HEK293 (cell line): ENCODE measurements at regions of chr11 and their contacts with region 1.

Region 1: GRCh38 chr11:66842896-66843775 is at the start of gene RCE1:
- H3K4me3 ChIP-seq: peak within 1 kb of the TSS; percentile 71
- H3K27ac ChIP-seq: peak within 1 kb of the TSS; percentile 86
- H3K4me1 ChIP-seq: no peaks in the 10 kb centered on the region
- CTCF ChIP-seq: no peak; the same call in 1 of the 2 replicates

Region 2: DNA sequence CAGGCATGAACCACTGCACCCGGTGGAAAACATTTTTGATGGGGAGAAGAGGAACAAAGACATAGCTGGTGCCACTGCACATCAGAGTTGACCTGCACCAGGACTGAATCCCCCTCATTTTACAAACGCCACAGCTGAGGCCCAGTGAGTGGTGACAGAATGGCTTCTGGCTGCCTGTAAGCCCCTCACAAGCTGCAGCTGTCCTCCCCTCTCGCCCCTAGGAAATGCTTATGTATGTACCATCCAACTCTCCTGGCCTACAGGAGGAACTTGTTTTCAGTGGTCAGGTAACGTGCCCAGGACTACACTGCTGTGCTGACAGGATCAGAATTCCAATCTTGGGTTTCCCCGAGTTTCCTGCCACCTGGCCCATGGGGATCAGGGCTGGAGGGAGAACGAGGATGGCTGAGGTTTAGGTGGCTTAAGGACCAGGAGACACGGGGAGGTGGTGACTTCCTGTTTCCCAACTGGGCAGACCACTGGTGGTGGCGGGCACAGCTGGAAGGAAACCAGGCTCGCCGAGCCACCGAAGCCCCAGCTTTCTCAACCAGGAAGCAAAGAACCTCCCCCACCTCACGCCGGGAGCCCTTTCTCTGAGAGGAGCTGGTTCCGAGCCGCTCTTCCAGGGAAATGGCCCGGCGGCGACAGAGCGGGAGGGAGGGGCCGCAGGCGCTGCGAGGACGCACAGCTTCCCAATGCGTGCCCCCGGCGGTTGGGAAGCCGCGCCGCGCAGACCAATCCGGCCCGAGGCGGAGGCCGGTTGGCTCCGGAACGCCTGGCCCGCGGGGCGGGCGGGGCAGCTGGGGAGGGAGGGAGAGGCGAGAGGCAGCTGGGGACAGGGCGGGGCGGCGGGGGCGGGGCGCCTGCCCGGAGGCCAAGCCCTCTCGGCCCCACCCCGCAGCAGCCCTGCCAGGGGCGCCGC is 12.7 kb after region 1 on chr11:
- CTCF ChIA-PET with region 1: interaction called, 4 read pairs
- POLR2A ChIA-PET with region 1: interaction called, 40 read pairs
- H3K4me3 ChIP-seq: peak overlapping the region; percentile 60
- H3K27ac ChIP-seq: peak overlapping the region; percentile 34; the same call in 1 of the 2 replicates
- H3K4me1 ChIP-seq: no peaks in the 10 kb centered on the region
- CTCF ChIP-seq: no peak